ENCODE measurements at regions of chr3 and their contacts with region 1.

Region 1: GRCh38 chr3:111717601-111718000 is 122.5 kb upstream of the ZBED2 start:
- DNase-seq: peak; percentile 60 to 70 (median 65)
- H3K4me3 ChIP-seq: no peak overlapping the region
- H3K4me3 Mint-ChIP-seq: no peak overlapping the region
- H3K27ac ChIP-seq: no peak overlapping the region
- H3K27ac Mint-ChIP-seq: peak overlapping the region in 5 of 7 donors; percentile 4 to 78 (median 73)
- H3K4me1 ChIP-seq: no peaks in the 10 kb centered on the region
- H3K4me1 Mint-ChIP-seq: peaks cover 0 to 5% (median 4%) of the 10 kb centered on the region in 4 donors
- H3K27me3 ChIP-seq: no peaks in the 10 kb centered on the region
- H3K27me3 Mint-ChIP-seq: no peaks in the 10 kb centered on the region

Region 2: GRCh38 chr3:111577794-111578685 is 139.6 kb before region 1 on chr3:
- CTCF ChIA-PET with region 1: interaction called, 13 read pairs
- POLR2A ChIA-PET with region 1: no interaction called
- intact Hi-C with region 1: no loop called
- DNase-seq: peak in 4 of 5 donors; percentile 10 to 28 (median 20)
- H3K4me3 ChIP-seq: no peak overlapping the region
- H3K4me3 Mint-ChIP-seq: peak overlapping the region in 1 of 8 donors; percentile 6
- H3K27ac ChIP-seq: no peak overlapping the region
- H3K27ac Mint-ChIP-seq: peak overlapping the region in 6 of 7 donors; percentile 0 to 73 (median 46)
- H3K4me1 ChIP-seq: peaks cover 10% of the 10 kb centered on the region
- H3K4me1 Mint-ChIP-seq: peaks cover 31 to 60% (median 45%) of the 10 kb centered on the region in 4 donors
- H3K27me3 ChIP-seq: no peaks in the 10 kb centered on the region
- H3K27me3 Mint-ChIP-seq: no peaks in the 10 kb centered on the region

Region 3: GRCh38 chr3:111691293-111691909 is 26.2 kb before region 1 on chr3:
- CTCF ChIA-PET with region 1: interaction called, 48 read pairs
- POLR2A ChIA-PET with region 1: no interaction called
- intact Hi-C with region 1: no loop called
- DNase-seq: peak in 2 of 5 donors; percentile 27 to 30
- H3K4me3 ChIP-seq: no peak overlapping the region
- H3K4me3 Mint-ChIP-seq: no peak overlapping the region
- H3K27ac ChIP-seq: no peak overlapping the region
- H3K27ac Mint-ChIP-seq: peak overlapping the region in 2 of 7 donors; percentile 23 to 45
- H3K4me1 ChIP-seq: peaks cover 19% of the 10 kb centered on the region
- H3K4me1 Mint-ChIP-seq: peaks cover 32 to 51% (median 39%) of the 10 kb centered on the region in 4 donors
- H3K27me3 ChIP-seq: no peaks in the 10 kb centered on the region
- H3K27me3 Mint-ChIP-seq: no peaks in the 10 kb centered on the region

Region 4: GRCh38 chr3:111727843-111728565 is 10.4 kb after region 1 on chr3:
- CTCF ChIA-PET with region 1: interaction called, 11 read pairs
- POLR2A ChIA-PET with region 1: no interaction called
- intact Hi-C with region 1: no loop called
- DNase-seq: no peak
- H3K4me3 ChIP-seq: no peak overlapping the region
- H3K4me3 Mint-ChIP-seq: no peak overlapping the region
- H3K27ac ChIP-seq: no peak overlapping the region
- H3K27ac Mint-ChIP-seq: peak overlapping the region in 1 of 7 donors; percentile 11
- H3K4me1 ChIP-seq: no peaks in the 10 kb centered on the region
- H3K4me1 Mint-ChIP-seq: peaks cover 0 to 3% (median 0%) of the 10 kb centered on the region in 4 donors
- H3K27me3 ChIP-seq: no peaks in the 10 kb centered on the region
- H3K27me3 Mint-ChIP-seq: no peaks in the 10 kb centered on the region

Region 5: GRCh38 chr3:111956995-111957734 is 239.6 kb after region 1 on chr3:
- CTCF ChIA-PET with region 1: interaction called, 423 read pairs
- POLR2A ChIA-PET with region 1: no interaction called
- intact Hi-C with region 1: no loop called
- DNase-seq: no peak
- H3K4me3 ChIP-seq: no peak overlapping the region
- H3K4me3 Mint-ChIP-seq: no peak overlapping the region
- H3K27ac ChIP-seq: no peak overlapping the region
- H3K27ac Mint-ChIP-seq: peak overlapping the region in 1 of 7 donors; percentile 14
- H3K4me1 ChIP-seq: no peaks in the 10 kb centered on the region
- H3K4me1 Mint-ChIP-seq: no peaks in the 10 kb centered on the region
- H3K27me3 ChIP-seq: no peaks in the 10 kb centered on the region
- H3K27me3 Mint-ChIP-seq: no peaks in the 10 kb centered on the region

Region 6: GRCh38 chr3:111978493-111979433 is 261.2 kb after region 1 on chr3 and contains the start of gene ABHD10:
- CTCF ChIA-PET with region 1: interaction called, 29 read pairs
- POLR2A ChIA-PET with region 1: interaction called, 7 read pairs
- intact Hi-C with region 1: no loop called
- DNase-seq: peak; percentile 92 to 98 (median 96)
- H3K4me3 ChIP-seq: peak within 1 kb of the TSS; percentile 90 to 95
- H3K4me3 Mint-ChIP-seq: peak within 1 kb of the TSS; percentile 92 to 97 (median 92)
- H3K27ac ChIP-seq: peak within 1 kb of the TSS; percentile 80
- H3K27ac Mint-ChIP-seq: peak within 1 kb of the TSS; percentile 91 to 97 (median 95)
- H3K4me1 ChIP-seq: peaks cover 43% of the 10 kb centered on the region
- H3K4me1 Mint-ChIP-seq: peaks cover 26 to 48% (median 35%) of the 10 kb centered on the region in 4 donors
- H3K27me3 ChIP-seq: no peaks in the 10 kb centered on the region
- H3K27me3 Mint-ChIP-seq: no peaks in the 10 kb centered on the region
- total RNA-seq, gene ABHD10: 39.7 to 40.1 TPM

Region 7: GRCh38 chr3:112013058-112013783 is 295.6 kb after region 1 on chr3:
- CTCF ChIA-PET with region 1: interaction called, 138 read pairs
- POLR2A ChIA-PET with region 1: interaction called, 3 read pairs
- intact Hi-C with region 1: loop called (anchors 1 kb)
- DNase-seq: peak; percentile 46 to 54 (median 51)
- H3K4me3 ChIP-seq: peak overlapping the region in 1 of 2 donors; percentile 19
- H3K4me3 Mint-ChIP-seq: peak overlapping the region in 5 of 8 donors; percentile 3 to 51 (median 33)
- H3K27ac ChIP-seq: no peak overlapping the region
- H3K27ac Mint-ChIP-seq: peak overlapping the region in 3 of 7 donors; percentile 4 to 57 (median 56)
- H3K4me1 ChIP-seq: peaks cover 4% of the 10 kb centered on the region
- H3K4me1 Mint-ChIP-seq: peaks cover 5 to 12% (median 8%) of the 10 kb centered on the region in 4 donors
- H3K27me3 ChIP-seq: no peaks in the 10 kb centered on the region
- H3K27me3 Mint-ChIP-seq: no peaks in the 10 kb centered on the region

Measured in CD4-positive, alpha-beta memory T cell (primary cell).